Activated CD4-positive, alpha-beta T cell treated with anti-CD3 and anti-CD28 coated beads, Interleukin-2, amount 10 ng/mL, durations not matched to agents 24 days and 14 days (primary cell): ENCODE measurements at regions of chr19 and their contacts with region 1.

Region 1: GRCh38 chr19:11293433-11294389 is 2.2 kb upstream of the TSPAN16 start:
- DNase-seq: peak; percentile 96
- H3K4me3 Mint-ChIP-seq: peak overlapping the region; percentile 66
- H3K27ac Mint-ChIP-seq: no peak overlapping the region
- H3K4me1 Mint-ChIP-seq: peaks cover 4% of the 10 kb centered on the region
- H3K27me3 Mint-ChIP-seq: peaks cover 47% of the 10 kb centered on the region

Region 2: GRCh38 chr19:11482384-11483050 is 188.8 kb after region 1 on chr19:
- intact Hi-C with region 1: loop called (anchors 2 kb)
- DNase-seq: peak; percentile 96
- H3K4me3 Mint-ChIP-seq: peak overlapping the region; percentile 84
- H3K27ac Mint-ChIP-seq: peak overlapping the region; percentile 90
- H3K4me1 Mint-ChIP-seq: peaks cover 18% of the 10 kb centered on the region
- H3K27me3 Mint-ChIP-seq: peaks cover 29% of the 10 kb centered on the region

Region 3: DNA sequence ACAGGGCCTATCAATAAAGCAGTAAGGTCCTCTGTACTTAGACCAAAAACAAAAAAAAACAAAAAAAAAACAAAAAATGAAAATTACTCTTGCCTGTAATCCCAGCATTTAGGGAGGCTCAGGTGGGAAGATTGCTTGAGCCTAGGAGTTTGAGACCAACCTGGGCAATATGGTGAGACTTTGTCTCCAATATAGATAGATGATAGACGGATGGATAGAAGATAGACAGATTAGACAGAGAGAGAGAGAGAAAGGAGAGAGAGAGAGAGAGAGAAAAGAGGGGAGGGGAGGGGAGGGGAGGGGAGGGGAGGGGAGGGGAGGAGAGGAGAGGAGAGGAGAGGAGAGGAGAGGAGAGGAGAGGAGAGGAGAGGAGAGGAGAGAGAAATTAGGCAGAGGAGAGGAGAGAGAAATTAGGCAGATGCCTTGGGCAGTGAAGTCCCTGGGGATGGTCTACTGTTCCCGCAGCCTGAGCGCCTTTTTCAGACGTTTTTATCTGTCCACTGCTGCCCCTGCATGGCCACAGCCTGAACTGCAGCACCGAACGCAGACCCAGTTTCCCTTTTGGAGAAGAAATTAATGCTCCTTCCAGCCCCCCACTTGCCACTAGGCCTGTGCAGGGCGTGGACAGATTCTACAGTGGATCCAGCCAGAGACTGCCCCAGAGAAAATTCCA is 293.7 kb after region 1 on chr19:
- intact Hi-C with region 1: loop called (anchors 10 kb)
- DNase-seq: peak; percentile 95
- H3K4me3 Mint-ChIP-seq: no peak overlapping the region
- H3K27ac Mint-ChIP-seq: peak overlapping the region; percentile 26
- H3K4me1 Mint-ChIP-seq: peaks cover 3% of the 10 kb centered on the region
- H3K27me3 Mint-ChIP-seq: no peaks in the 10 kb centered on the region